Activated naive CD4-positive, alpha-beta T cell treated with anti-CD3 and anti-CD28 coated beads for 36 hours (primary cell): ENCODE measurements at regions of chr1 and their contacts with region 1.

Region 1: DNA sequence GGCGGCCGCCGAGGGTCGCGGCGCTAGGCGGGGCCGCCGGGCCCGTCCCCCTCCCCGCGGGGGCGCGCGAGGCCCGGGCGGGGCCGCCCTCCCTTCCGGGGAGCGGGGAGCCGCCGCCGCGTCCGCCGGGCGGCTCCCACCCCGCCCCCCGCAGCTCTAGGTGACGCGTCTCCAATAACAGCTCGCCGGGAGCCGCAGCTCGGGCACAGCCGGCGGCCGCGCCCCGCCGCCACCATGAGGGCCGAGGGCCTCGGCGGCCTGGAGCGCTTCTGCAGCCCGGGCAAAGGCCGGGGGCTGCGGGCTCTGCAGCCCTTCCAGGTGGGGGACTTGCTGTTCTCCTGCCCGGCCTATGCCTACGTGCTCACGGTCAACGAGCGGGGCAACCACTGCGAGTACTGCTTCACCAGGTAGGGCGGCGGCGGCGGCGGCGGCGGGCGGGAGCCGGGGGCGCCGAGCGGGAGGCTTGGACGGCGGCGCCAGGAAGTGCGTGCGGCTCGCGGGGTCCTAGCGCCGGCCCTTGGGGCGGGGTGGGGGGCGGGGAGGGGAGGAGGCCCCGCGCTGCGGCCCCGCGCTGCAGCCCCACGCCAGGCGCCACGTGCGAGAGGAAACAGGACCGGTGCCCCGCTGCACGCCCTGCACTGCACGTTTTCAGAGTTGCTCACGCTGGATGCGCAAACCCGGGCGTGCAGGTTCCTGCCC is at the start of gene SMYD2:
- DNase-seq: peak; percentile 66
- H3K4me3 Mint-ChIP-seq: peak within 1 kb of the TSS; percentile 87
- H3K27ac Mint-ChIP-seq: peak within 1 kb of the TSS; percentile 74
- H3K4me1 Mint-ChIP-seq: peaks cover 40% of the 10 kb centered on the region
- H3K27me3 Mint-ChIP-seq: no peaks in the 10 kb centered on the region
- total RNA-seq, gene SMYD2: 33.4 to 38.4 TPM

Region 2: GRCh38 chr1:214310010-214310409 is 28.8 kb after region 1 on chr1:
- CTCF ChIA-PET with region 1: no interaction called
- intact Hi-C with region 1: loop called (anchors 1 kb)
- DNase-seq: peak; percentile 12
- H3K4me3 Mint-ChIP-seq: no peak overlapping the region
- H3K27ac Mint-ChIP-seq: no peak overlapping the region
- H3K4me1 Mint-ChIP-seq: peaks cover 30% of the 10 kb centered on the region
- H3K27me3 Mint-ChIP-seq: no peaks in the 10 kb centered on the region